Gastrocnemius medialis (tissue), 4 donors: ENCODE measurements at regions of chr16 and their contacts with region 1.

Region 1: GRCh38 chr16:71288890-71289733 is at the start of gene CMTR2:
- DNase-seq: peak; percentile 86 to 93
- ATAC-seq: peak; percentile 96 to 98
- H3K4me3 ChIP-seq: peak within 1 kb of the TSS; percentile 81 to 87 (median 85)
- H3K27ac ChIP-seq: peak within 1 kb of the TSS; percentile 87 to 95 (median 90)
- H3K4me1 ChIP-seq: peaks cover 15 to 19% of the 10 kb centered on the region in 2 donors
- H3K27me3 ChIP-seq: no peaks in the 10 kb centered on the region
- CTCF ChIP-seq: no peak
- POLR2A ChIP-seq: peak; percentile 75 to 81
- total RNA-seq, gene CMTR2: 11.2 to 18.0 (median 12.3) TPM

Region 2: GRCh38 chr16:71484006-71484893 is 195.1 kb after region 1 on chr16:
- in situ Hi-C with region 1: no loop called
- intact Hi-C with region 1: loop called (anchors 10 kb)
- DNase-seq: peak; percentile 79 to 80
- ATAC-seq: peak; percentile 99 to 100
- H3K4me3 ChIP-seq: peak overlapping the region; percentile 92 to 99 (median 96)
- H3K27ac ChIP-seq: peak overlapping the region; percentile 91 to 98 (median 97)
- H3K4me1 ChIP-seq: peaks cover 11 to 13% of the 10 kb centered on the region in 2 donors
- H3K27me3 ChIP-seq: no peaks in the 10 kb centered on the region
- CTCF ChIP-seq: no peak
- POLR2A ChIP-seq: peak; percentile 45 to 49